Motor neuron (in vitro differentiated cells): ENCODE measurements at regions of chr12 and their contacts with region 1.

Region 1: GRCh38 chr12:109393437-109394345 is 46.0 kb downstream of the MYO1H start:
- ATAC-seq: peak in 5 of 8 experiments; percentile 33 to 85 (median 72)
- H3K4me3 ChIP-seq: no peak overlapping the region
- H3K27ac ChIP-seq: no peak overlapping the region
- H3K4me1 ChIP-seq: no peaks in the 10 kb centered on the region

Region 2: GRCh38 chr12:109110988-109111495 is 282.6 kb before region 1 on chr12:
- in situ Hi-C with region 1: loop called in 4 of 9 experiments (anchors 10 to 25 kb)
- ATAC-seq: peak; percentile 81 to 96 (median 94)
- H3K4me3 ChIP-seq: peak overlapping the region; percentile 11 to 47 (median 28)
- H3K27ac ChIP-seq: peak overlapping the region; percentile 62 to 89
- H3K4me1 ChIP-seq: peaks cover 4 to 24% of the 10 kb centered on the region in 2 donors

Region 3: DNA sequence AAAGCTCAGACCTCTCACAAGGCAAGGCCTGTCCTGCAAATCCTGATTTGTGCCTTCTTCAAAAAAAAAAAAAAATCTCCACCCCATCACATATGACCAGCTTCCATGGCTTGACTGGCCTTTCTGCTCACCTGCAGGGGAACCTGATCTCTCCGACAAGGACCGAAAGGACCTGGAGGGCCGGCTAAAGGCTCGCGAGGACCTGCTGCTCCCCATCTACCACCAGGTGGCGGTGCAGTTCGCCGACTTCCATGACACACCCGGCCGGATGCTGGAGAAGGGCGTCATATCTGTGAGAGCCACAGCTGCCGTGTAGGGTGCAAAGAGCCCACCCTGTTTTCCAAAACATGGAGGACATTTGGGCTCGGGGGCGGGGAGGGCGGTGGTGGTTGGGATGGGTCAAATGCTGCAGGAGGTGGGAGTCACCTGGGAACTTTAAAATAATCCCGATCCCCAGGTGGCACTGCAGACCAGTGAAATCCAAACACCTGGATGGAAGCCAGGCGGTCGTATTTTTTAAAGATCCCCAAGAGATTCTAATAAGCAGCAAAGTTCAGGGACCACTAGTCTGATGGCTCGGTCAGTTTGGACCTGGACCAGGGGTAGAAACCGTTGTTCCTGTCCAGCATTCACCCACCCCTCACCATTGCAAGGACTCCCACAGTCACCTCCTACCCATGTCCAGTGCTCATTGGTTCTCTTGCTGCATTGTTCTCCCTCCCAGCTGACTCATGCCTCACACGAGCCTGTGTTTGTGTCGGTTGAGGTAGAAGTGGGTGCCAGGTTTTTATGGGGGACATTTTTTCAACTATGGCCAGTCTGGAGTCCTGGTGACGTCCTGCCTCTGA is 129.4 kb before region 1 on chr12:
- in situ Hi-C with region 1: loop called in 8 of 9 experiments (anchors 10 to 25 kb)
- ATAC-seq: peak; percentile 82 to 98 (median 96)
- H3K4me3 ChIP-seq: no peak overlapping the region
- H3K27ac ChIP-seq: no peak overlapping the region
- H3K4me1 ChIP-seq: peaks cover 0 to 5% of the 10 kb centered on the region in 2 donors